CD4-positive, alpha-beta memory T cell (primary cell): ENCODE measurements at regions of chr6 and their contacts with region 1.

Region 1: DNA sequence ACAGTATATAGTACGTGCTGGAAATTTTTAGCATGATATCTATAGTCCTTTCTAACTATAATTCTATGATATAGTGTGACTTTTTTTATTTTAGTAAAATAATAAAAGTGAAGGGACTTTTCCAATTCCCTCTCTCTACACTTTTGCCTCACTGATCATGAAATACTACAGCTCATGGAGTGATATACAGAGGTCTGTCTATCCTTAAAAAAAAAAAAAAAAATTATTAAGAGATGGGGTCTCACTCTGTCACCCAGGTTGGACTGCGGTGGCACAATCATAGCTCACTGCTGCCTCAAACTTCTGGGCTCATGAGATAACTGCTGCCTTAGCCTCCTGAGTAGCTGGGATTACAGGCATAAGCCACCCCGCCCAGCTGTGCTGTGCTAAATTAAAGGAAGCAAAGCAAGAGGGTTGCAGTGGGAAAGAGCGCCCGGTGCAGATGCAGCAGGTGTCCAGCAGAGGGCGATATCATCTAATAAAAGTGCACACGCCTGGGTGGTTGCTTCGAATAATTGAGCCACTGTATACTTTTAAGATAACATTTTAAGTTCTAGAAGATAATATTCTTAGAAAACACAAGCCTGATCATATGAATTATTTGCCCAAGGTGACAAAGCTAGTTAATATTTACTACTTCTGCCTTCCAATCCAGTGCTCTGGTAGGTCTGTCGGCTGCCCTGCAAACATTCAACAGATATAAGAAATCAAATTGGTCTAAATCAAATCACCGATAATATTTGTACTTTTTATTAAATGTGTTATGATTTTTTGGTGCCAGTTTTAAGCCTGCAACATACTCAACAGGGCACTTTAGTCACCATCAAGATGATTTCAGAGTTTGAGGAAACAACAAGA is 94.9 kb upstream of the NT5E start:
- DNase-seq: peak in 4 of 5 donors; percentile 27 to 46 (median 40)
- H3K4me3 ChIP-seq: no peak overlapping the region
- H3K4me3 Mint-ChIP-seq: no peak overlapping the region
- H3K27ac ChIP-seq: no peak overlapping the region
- H3K27ac Mint-ChIP-seq: no peak overlapping the region
- H3K4me1 ChIP-seq: no peaks in the 10 kb centered on the region
- H3K4me1 Mint-ChIP-seq: no peaks in the 10 kb centered on the region
- H3K27me3 ChIP-seq: no peaks in the 10 kb centered on the region
- H3K27me3 Mint-ChIP-seq: peaks cover 2 to 5% of the 10 kb centered on the region in 2 donors

Region 2: DNA sequence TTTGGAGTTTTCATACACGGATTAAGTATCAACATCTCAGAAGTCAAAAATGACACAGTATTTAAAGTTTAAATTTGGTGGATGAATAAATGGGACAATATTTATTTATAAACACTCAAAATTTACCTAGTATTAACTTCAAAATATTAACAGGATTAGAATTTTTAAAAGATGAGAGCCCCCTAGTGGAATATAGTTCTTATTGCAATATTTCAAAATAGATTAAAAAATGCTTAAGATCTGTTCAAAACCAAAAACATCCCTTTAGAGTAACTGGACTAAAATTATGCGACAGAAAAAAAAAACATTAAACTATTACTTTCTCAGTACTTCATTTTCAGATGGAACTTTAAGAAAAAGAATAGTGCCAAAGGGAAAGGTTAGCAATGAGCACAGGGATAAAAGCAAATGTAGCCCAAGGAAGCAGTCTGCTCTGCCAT is 182.1 kb after region 1 on chr6:
- CTCF ChIA-PET with region 1: interaction called, 6 read pairs
- POLR2A ChIA-PET with region 1: no interaction called
- intact Hi-C with region 1: loop called (anchors 2 kb)
- DNase-seq: peak in 1 of 5 donors; percentile 6
- H3K4me3 ChIP-seq: no peak overlapping the region
- H3K4me3 Mint-ChIP-seq: no peak overlapping the region
- H3K27ac ChIP-seq: no peak overlapping the region
- H3K27ac Mint-ChIP-seq: peak overlapping the region in 1 of 7 donors; percentile 12
- H3K4me1 ChIP-seq: no peaks in the 10 kb centered on the region
- H3K4me1 Mint-ChIP-seq: peaks cover 0 to 2% (median under 1%) of the 10 kb centered on the region in 4 donors
- H3K27me3 ChIP-seq: no peaks in the 10 kb centered on the region
- H3K27me3 Mint-ChIP-seq: no peaks in the 10 kb centered on the region

Region 3: GRCh38 chr6:86192123-86192522 is 837.1 kb after region 1 on chr6:
- CTCF ChIA-PET with region 1: no interaction called
- POLR2A ChIA-PET with region 1: no interaction called
- intact Hi-C with region 1: loop called (anchors 2 kb)
- DNase-seq: no peak
- H3K4me3 ChIP-seq: no peak overlapping the region
- H3K4me3 Mint-ChIP-seq: no peak overlapping the region
- H3K27ac ChIP-seq: no peak overlapping the region
- H3K27ac Mint-ChIP-seq: no peak overlapping the region
- H3K4me1 ChIP-seq: no peaks in the 10 kb centered on the region
- H3K4me1 Mint-ChIP-seq: no peaks in the 10 kb centered on the region
- H3K27me3 ChIP-seq: no peaks in the 10 kb centered on the region
- H3K27me3 Mint-ChIP-seq: no peaks in the 10 kb centered on the region

Region 4: DNA sequence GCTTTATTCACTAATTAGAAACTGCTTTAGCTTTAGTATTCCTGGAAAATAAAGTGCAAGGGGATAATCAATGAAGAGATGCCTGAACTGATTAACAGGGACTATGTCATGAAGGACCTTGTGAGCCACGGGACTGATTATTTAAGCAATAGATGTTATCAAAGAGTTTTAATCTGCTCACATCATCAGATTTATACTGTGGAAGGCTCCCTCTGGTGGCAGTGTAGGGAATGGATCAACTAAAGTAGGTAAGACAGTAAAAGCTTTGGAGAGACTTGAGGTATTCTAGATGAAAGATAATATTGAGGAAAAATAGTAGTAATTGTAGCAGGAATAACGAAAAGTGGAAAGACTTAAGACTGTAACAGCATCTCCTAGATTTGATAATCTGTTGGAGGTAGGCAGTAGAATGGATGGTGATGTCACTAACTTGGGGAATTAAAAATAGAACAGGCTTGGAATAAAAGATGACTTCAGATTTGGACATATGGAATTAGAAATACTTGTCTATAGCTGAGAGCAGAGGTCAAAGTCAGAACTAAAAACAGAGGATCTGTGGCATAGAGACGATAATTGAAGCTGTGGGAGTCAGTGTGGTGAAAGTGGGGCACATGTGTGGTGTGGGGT is 1502.1 kb after region 1 on chr6:
- CTCF ChIA-PET with region 1: no interaction called
- POLR2A ChIA-PET with region 1: no interaction called
- intact Hi-C with region 1: loop called (anchors 5 kb)
- DNase-seq: no peak
- H3K4me3 ChIP-seq: no peak overlapping the region
- H3K4me3 Mint-ChIP-seq: no peak overlapping the region
- H3K27ac ChIP-seq: no peak overlapping the region
- H3K27ac Mint-ChIP-seq: no peak overlapping the region
- H3K4me1 ChIP-seq: no peaks in the 10 kb centered on the region
- H3K4me1 Mint-ChIP-seq: no peaks in the 10 kb centered on the region
- H3K27me3 ChIP-seq: no peaks in the 10 kb centered on the region
- H3K27me3 Mint-ChIP-seq: no peaks in the 10 kb centered on the region

Region 5: GRCh38 chr6:87029711-87030314 is 1674.8 kb after region 1 on chr6:
- CTCF ChIA-PET with region 1: no interaction called
- POLR2A ChIA-PET with region 1: no interaction called
- intact Hi-C with region 1: loop called (anchors 2 kb)
- DNase-seq: peak in 2 of 5 donors; percentile 1 to 2
- H3K4me3 ChIP-seq: no peak overlapping the region
- H3K4me3 Mint-ChIP-seq: no peak overlapping the region
- H3K27ac ChIP-seq: no peak overlapping the region
- H3K27ac Mint-ChIP-seq: no peak overlapping the region
- H3K4me1 ChIP-seq: no peaks in the 10 kb centered on the region
- H3K4me1 Mint-ChIP-seq: no peaks in the 10 kb centered on the region
- H3K27me3 ChIP-seq: no peaks in the 10 kb centered on the region
- H3K27me3 Mint-ChIP-seq: peaks cover 0 to 9% of the 10 kb centered on the region in 2 donors